ENCODE measurements at regions of chr2 and their contacts with region 1.

Region 1: DNA sequence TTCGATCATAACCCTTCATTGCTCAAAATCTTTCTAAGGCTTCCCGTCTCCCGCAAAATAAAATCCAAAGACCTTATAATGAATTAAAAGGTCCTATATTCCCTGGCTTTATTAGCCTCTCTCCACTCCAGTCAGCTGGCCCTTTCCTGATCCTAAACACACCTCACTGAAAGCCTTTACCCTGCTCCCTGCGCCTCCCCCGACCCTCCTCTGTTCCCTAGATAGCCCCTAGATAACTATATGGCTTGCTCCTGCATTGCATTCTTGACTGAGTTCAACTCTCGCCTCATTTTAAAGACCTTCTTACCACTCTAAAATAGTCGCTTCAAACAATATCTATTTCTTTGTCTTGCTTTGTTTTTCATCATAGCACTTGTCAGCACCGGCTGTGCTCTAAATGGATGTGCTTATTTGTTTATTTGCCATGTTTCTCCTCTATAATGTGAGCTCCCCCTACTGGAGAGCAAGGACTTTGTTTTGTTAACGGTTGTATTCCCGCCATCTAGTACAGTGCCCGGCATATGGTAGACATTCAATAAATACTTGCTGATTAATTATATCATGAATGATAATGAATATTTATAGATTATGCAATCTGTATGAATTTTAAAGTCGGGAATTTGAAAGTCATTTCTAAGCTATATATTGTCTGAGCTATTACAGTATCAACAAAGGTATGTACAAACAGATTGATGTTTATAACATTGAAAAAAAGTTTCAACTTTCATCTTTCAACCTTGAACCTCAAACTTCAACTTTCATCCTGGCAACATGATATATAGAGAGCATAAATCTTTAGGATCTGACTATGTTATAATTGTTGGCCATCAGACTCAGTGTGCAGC is 32.4 kb upstream of the VIT start:
- DNase-seq: no peak

Region 2: DNA sequence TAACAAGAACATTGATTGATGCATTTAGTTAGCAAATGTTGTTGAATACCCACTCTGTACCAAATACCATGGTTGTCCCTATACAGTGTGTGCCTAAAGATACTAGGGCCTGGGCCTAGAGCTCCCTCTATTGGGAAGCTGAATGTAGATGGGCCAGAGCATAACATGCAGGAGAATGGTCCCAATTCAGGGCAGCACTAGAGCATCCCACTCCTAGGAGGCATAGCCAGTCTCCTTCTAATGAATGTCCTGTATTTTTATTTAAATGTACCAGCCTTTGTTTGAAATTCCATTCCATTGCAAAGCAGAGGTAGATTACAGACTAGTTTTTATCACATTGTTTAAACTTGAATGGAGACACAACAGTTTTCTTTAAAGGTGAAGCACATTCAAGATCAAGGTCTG is 156.7 kb before region 1 on chr2:
- intact Hi-C with region 1: loop called (anchors 5 kb)
- DNase-seq: no peak

Region 3: GRCh38 chr2:36562973-36563532 is 101.0 kb before region 1 on chr2:
- intact Hi-C with region 1: no loop called
- DNase-seq: no peak